ENCODE measurements at regions of chr2 and their contacts with region 1.

Region 1: DNA sequence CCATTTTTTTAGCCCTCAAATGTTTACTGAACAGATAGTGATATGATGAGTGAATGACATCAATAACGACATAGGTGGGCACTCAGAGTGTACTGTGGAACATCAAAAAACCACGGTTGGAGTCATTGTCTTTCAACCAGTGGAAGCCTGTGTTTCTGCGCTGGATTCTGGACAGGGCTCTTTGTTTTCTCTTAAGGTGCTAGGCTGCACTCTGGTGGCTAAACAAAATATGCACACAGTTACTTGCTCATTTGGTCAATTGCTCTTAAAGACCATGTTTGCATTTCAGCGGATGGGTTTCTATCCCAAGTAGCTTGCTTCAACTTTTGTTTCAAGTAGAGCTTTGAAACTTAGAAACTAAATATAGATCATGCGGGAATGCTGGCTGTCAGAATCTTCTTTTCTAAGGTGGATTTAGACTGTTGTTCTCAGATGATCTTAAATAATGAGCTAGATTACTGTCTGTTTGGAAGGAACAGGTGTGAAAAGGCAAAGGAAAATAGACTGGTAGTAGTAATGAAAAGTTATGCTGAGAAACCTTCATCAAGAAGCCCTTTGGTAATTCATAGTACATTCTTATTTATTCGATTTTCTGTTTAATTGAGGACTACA is 48.5 kb upstream of the LYPD6B start:
- DNase-seq: no peak

Region 2: DNA sequence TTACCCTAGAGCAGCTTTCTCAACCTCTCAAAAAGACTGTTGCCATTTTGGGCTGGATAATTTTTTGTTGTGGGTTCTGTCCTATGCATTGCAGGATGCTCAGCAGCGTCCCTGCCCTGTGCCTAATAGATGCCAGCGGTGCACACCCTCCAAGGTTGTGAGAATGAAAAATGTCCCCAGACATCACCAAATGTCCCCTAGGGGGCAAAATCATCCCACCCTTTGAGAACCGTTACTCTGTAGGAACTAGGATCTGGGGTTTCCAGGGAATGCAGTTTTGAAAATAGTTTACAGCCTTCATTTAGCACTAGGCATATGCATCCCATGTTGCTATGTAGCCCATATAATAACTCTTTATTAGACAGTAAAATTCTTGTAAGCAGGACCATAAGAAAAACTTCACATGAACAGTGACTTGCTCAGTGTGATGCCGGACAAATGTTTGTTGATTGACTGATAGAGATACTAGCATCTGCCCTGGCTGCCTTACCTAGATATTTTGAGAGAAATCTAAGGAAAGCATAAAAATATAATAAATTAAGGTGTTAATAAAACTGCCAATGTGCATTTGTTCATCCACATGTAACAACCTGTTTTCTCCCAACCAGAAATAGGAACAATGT is 424.6 kb before region 1 on chr2:
- intact Hi-C with region 1: loop called (anchors 5 kb)
- DNase-seq: no peak

Region 3: GRCh38 chr2:149143734-149144133 is 153.7 kb after region 1 on chr2:
- intact Hi-C with region 1: no loop called
- DNase-seq: no peak

Measured in cardiac septum (tissue), 1 donor.